ENCODE measurements at regions of chr17 and their contacts with region 1.

Region 1: GRCh38 chr17:5249615-5250014 is 15.0 kb upstream of the SCIMP start:
- DNase-seq: peak; percentile 44 to 75 (median 53)
- ATAC-seq: peak; percentile 86
- H3K4me3 ChIP-seq: no peak overlapping the region
- H3K27ac ChIP-seq: no peak overlapping the region
- H3K4me1 ChIP-seq: no peaks in the 10 kb centered on the region; a peak in 1 of 5 replicates
- H3K27me3 ChIP-seq: no peaks in the 10 kb centered on the region; a peak in 1 of 5 replicates
- CTCF ChIP-seq: peak; percentile 53 to 70 (median 55); a peak in 5 of 6 replicates
- EP300 ChIP-seq: no peak
- POLR2A ChIP-seq: no peak
- RAD21 ChIP-seq: peak; percentile 58 to 69

Region 2: GRCh38 chr17:5226940-5227878 is 22.4 kb before region 1 on chr17:
- CTCF ChIA-PET with region 1: no interaction called
- POLR2A ChIA-PET with region 1: no interaction called
- in situ Hi-C with region 1: no loop called
- intact Hi-C with region 1: no loop called
- DNase-seq: no peak
- ATAC-seq: no peak
- H3K4me3 ChIP-seq: no peak overlapping the region
- H3K27ac ChIP-seq: no peak overlapping the region
- H3K4me1 ChIP-seq: no peaks in the 10 kb centered on the region; a peak in 1 of 5 replicates
- H3K27me3 ChIP-seq: peaks cover 0 to 11% of the 10 kb centered on the region in 2 experiments; a peak in 1 of 5 replicates
- CTCF ChIP-seq: no peak
- EP300 ChIP-seq: no peak
- POLR2A ChIP-seq: no peak
- RAD21 ChIP-seq: no peak

Region 3: GRCh38 chr17:5304636-5305035 is 55.0 kb after region 1 on chr17:
- CTCF ChIA-PET with region 1: no interaction called
- POLR2A ChIA-PET with region 1: no interaction called
- in situ Hi-C with region 1: no loop called
- intact Hi-C with region 1: loop called (anchors 2 kb)
- DNase-seq: no peak
- ATAC-seq: no peak
- H3K4me3 ChIP-seq: no peak overlapping the region
- H3K27ac ChIP-seq: no peak overlapping the region
- H3K4me1 ChIP-seq: no peaks in the 10 kb centered on the region
- H3K27me3 ChIP-seq: no peaks in the 10 kb centered on the region
- CTCF ChIP-seq: no peak
- EP300 ChIP-seq: no peak
- POLR2A ChIP-seq: no peak
- RAD21 ChIP-seq: no peak

Region 4: GRCh38 chr17:5438716-5439445 is 189.3 kb after region 1 on chr17 and contains the start of gene C1QBP:
- CTCF ChIA-PET with region 1: interaction called, 9 read pairs
- POLR2A ChIA-PET with region 1: no interaction called
- in situ Hi-C with region 1: no loop called
- intact Hi-C with region 1: loop called (anchors 1 kb)
- DNase-seq: peak; percentile 85 to 94 (median 88)
- ATAC-seq: peak; percentile 95
- H3K4me3 ChIP-seq: peak within 1 kb of the TSS; percentile 94
- H3K27ac ChIP-seq: peak within 1 kb of the TSS; percentile 85
- H3K4me1 ChIP-seq: peaks cover 8 to 9% of the 10 kb centered on the region in 2 experiments; a peak in 4 of 5 replicates
- H3K27me3 ChIP-seq: no peaks in the 10 kb centered on the region
- CTCF ChIP-seq: peak; percentile 93 to 98 (median 98)
- EP300 ChIP-seq: no peak
- POLR2A ChIP-seq: peak; percentile 67; the same call in 1 of the 2 replicates
- RAD21 ChIP-seq: peak; percentile 54 to 77
- polyA plus RNA-seq, gene C1QBP: 90.7 to 107 TPM

Region 5: GRCh38 chr17:6421700-6422604 is 1172.3 kb after region 1 on chr17:
- CTCF ChIA-PET with region 1: no interaction called
- POLR2A ChIA-PET with region 1: no interaction called
- in situ Hi-C with region 1: loop called (anchors 25 kb)
- intact Hi-C with region 1: loop called (anchors 5 kb)
- DNase-seq: peak; percentile 83 to 88 (median 86)
- ATAC-seq: peak; percentile 96
- H3K4me3 ChIP-seq: no peak overlapping the region
- H3K27ac ChIP-seq: no peak overlapping the region
- H3K4me1 ChIP-seq: no peaks in the 10 kb centered on the region
- H3K27me3 ChIP-seq: peaks cover 2 to 37% of the 10 kb centered on the region in 2 experiments; a peak in 3 of 5 replicates
- CTCF ChIP-seq: peak; percentile 83 to 86 (median 84)
- EP300 ChIP-seq: no peak
- POLR2A ChIP-seq: no peak
- RAD21 ChIP-seq: peak; percentile 81 to 89

Region 6: DNA sequence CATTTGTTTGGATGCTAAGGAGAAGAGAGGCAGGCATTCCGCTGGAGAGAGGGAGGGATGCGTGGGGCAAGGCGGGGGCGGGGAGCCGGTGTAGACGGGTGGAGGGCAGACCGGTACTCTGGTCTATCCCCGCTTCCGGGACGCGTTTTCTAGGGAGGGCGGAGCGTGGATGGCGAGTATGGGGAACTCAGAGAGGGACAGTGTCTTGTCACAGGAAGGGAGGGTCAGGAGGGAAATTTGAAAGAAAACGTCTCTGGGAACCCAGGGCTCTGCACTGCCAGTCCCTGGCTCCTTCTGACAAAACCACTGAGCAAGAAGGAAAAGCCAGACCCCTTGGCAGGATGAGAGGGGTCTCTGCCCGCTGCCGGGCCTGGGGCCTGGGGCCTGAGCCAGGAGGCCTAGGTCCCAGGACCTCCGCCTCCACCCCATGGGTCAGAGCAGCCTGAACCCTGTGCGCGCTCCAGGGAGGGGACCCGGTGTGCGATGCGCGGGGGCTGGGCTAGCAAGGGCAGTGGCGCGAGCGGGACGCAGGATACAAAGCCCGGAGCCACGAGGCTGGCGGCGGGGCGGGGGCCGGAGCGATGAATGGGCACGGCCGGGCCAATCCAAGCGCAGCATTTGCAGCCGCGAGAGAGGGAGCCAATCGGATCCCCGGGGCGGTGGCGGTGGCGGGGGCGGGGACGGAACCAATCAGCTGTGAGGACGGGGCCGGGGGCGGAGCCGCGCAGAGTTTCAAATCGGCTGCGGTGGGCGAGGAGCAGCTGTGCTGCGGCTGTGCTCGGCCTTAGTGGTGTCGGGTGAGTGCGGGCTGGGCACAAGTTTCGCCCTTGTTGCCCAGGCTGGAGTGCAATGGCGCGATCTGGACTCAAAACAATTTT is 1194.3 kb after region 1 on chr17 and contains the start of gene PIMREG:
- CTCF ChIA-PET with region 1: no interaction called
- POLR2A ChIA-PET with region 1: no interaction called
- in situ Hi-C with region 1: loop called (anchors 25 kb)
- intact Hi-C with region 1: no loop called
- DNase-seq: peak; percentile 95 to 98 (median 98)
- ATAC-seq: peak; percentile 99
- H3K4me3 ChIP-seq: peak within 1 kb of the TSS; percentile 52
- H3K27ac ChIP-seq: peak within 1 kb of the TSS; percentile 72
- H3K4me1 ChIP-seq: peaks cover 0 to 16% of the 10 kb centered on the region in 2 experiments; a peak in 2 of 5 replicates
- H3K27me3 ChIP-seq: no peaks in the 10 kb centered on the region
- CTCF ChIP-seq: no peak
- EP300 ChIP-seq: no peak
- POLR2A ChIP-seq: peak; percentile 80
- RAD21 ChIP-seq: no peak
- polyA plus RNA-seq, gene PIMREG: 1.1 to 2.1 TPM